MCF 10A (cell line): ENCODE measurements at regions of chr10 and their contacts with region 1.

Region 1: GRCh38 chr10:7301006-7301793 is 109.6 kb downstream of the SFMBT2 start:
- DNase-seq: no peak
- H3K4me3 Mint-ChIP-seq: no peak overlapping the region
- H3K27ac Mint-ChIP-seq: peak overlapping the region; percentile 64
- H3K4me1 Mint-ChIP-seq: peaks cover 28% of the 10 kb centered on the region
- H3K27me3 Mint-ChIP-seq: no peaks in the 10 kb centered on the region
- CTCF ChIP-seq: no peak

Region 2: DNA sequence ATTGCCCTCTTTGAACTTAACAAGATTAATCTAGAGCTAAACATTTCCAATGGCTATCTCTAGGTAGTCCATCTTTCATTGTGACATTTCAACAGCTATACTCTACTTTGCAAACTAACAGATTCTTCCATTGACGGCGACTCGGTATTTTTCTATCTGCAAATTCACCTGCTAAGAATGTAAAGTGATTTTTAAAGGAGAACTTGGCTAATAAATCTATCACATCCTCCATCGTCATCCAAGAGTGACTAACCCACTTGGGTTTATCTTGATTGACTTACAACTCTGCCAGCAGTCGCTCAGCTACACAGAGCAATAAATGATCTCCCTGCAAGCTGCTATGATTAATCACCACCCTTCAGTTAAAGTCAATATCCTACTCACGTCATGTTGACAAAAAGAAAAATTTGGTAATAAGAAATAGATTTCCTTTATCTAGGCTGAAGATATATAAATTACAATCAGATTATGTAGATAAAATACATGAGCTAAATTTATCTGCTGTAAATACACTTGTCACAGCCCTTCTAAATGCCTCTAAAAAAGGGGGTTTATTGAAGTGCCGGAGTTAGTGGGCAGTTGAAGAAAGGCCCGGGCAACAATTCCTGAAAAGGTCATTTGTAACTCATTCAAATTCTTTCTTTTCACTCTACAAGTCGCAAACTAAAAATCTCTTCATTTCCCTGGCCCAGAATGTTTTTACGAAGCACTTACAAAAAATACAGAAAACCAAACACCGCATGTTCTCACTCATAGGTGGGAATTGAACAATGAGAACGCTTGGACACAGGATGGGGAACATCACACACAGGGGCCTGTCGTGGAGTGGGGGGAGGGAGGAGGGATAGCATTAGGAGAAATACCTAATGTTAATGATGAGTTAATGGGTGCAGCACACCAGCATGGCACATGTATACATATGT is 10.3 kb after region 1 on chr10:
- CTCF ChIA-PET with region 1: no interaction called
- POLR2A ChIA-PET with region 1: interaction called, 15 read pairs
- intact Hi-C with region 1: no loop called
- DNase-seq: peak; percentile 35
- H3K4me3 Mint-ChIP-seq: no peak overlapping the region
- H3K27ac Mint-ChIP-seq: no peak overlapping the region
- H3K4me1 Mint-ChIP-seq: peaks cover 16% of the 10 kb centered on the region
- H3K27me3 Mint-ChIP-seq: no peaks in the 10 kb centered on the region
- CTCF ChIP-seq: no peak

Region 3: DNA sequence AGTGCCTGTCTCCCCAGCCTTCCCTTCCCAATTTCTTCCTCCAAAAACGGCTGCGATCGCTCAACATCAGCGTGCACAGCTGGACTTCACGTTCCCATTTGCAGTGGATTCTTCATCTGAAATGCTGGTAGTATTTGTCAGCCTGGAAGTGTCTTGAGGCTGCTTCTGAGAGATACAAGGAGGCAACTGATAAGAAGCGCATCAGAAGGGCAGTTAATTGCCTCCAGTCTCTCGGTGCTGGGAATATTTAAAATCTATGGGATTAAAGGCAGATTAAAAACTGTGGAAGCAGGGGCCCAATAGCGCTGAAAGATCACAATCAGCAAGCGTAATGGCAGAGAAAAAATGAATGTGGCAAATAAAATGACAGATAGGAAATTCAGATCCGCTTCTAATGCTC is 1203.3 kb after region 1 on chr10:
- CTCF ChIA-PET with region 1: no interaction called
- POLR2A ChIA-PET with region 1: no interaction called
- intact Hi-C with region 1: no loop called
- DNase-seq: no peak
- H3K4me3 Mint-ChIP-seq: no peak overlapping the region
- H3K27ac Mint-ChIP-seq: no peak overlapping the region
- H3K4me1 Mint-ChIP-seq: no peaks in the 10 kb centered on the region
- H3K27me3 Mint-ChIP-seq: no peaks in the 10 kb centered on the region
- CTCF ChIP-seq: no peak